ENCODE measurements at regions of chr22 and their contacts with region 1.

Region 1: DNA sequence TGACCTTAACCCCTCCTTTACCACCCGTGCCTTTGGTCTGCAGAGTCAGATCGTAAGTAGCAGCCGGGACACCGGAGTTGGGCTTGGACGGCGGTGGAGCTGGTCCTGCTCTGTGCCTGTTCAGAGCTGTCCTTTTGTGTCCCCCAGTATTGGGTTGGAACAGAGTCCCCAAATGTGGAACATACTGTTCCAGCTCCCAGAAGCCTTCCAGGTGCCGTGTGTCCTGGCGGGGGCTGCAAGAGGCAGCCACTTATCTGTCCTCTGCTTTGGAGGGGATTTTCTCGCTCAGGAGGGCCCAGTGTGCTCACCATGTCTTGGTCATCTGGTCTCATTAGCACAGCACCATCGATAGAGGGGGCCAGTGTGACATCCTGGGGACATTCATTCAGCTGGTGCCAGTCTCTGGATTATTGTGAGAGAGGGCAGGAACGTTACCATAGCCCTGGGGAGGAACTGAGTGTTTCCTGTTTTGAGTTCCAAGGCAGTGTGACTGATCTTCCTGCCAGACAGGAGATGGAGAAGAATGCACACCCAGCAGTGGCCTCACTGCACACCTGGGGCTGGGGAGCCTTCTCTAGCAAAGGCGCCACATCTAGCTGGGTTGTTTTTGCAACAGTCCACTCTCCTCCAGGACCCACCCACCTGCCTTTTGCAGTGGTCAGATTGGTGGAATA is 12.4 kb downstream of the CRELD2 start:
- DNase-seq: peak; percentile 63
- CTCF ChIP-seq: peak; percentile 80

Region 2: GRCh38 chr22:49779853-49780697 is 150.8 kb before region 1 on chr22:
- CTCF ChIA-PET with region 1: no interaction called
- POLR2A ChIA-PET with region 1: no interaction called
- DNase-seq: no peak
- CTCF ChIP-seq: no peak

Region 3: DNA sequence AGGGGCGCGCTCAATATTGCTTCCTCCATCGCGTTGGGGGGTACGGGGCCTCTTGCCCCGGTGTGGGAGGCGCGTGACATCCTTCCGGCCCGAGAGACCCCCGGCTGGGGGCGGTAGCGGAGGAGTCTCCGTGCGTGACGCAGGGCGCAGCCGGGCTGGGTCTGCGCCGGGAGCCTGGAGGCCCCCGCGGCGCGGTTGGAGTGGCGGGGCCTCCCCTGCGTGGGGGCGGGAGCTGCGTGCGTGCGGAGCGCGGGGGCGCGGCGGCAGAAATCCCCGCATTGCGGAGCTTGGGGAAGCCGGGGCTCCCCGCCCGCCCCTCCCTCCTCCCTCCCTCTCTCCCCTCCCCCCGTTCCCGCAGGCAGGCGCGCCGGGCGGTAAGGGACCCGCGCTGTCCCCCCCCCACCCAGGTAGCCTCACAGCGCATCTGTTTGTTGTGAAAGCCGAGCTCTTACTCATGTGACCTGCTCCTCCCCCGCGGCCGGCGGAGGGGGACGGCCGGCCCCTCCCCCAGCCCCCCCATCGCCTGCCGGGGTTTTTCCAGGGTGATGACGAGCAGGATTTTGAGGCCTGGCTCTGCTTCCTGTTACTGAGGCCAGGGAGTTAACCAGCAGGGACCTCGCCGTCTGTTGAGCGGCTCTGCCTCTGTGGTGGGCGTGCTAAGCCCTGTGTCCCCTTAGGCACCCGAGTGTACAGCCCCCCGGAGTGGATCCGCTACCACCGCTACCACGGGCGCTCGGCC is 31.3 kb after region 1 on chr22:
- CTCF ChIA-PET with region 1: interaction called, 32 read pairs
- POLR2A ChIA-PET with region 1: interaction called, 9 read pairs
- DNase-seq: peak; percentile 84
- CTCF ChIP-seq: no peak

Region 4: DNA sequence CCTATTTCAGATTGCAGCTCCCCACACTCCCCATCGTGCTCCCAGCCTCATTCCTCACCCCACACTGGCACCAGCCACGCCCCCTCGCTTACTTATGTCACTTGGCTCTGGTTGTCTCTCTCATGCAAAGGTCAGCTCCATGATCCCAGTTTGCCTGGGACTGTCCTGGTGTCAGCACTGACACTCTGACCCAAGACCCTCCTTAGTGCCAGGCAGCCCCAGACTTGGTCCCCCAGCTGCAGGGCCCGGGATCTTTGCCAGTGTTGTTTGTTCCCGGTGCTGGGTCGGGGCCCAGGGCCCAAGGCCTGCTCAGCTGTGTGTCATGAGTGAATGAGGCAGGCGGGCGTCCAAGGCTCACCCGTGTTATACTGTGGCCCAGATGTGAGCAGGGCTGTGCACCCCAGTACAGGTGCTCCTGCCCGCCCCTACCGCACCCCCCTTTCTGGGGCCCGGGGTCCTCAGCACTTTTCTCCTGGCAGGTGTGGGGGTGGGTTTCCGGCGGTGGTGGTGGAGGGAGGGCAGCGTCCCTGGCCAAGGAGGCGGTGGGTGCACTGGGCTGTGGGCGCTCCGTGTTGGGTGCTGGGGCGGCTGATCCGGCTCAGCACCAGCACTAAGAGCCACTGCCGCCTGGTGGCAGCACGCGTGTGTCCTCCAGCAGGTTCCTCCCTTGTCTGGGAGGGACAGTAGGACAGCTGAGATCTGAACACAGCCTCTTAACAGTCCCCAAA is 62.2 kb after region 1 on chr22:
- CTCF ChIA-PET with region 1: interaction called, 31 read pairs
- POLR2A ChIA-PET with region 1: no interaction called
- DNase-seq: peak; percentile 88
- CTCF ChIP-seq: peak; percentile 93

Region 5: GRCh38 chr22:50030297-50031188 is 99.7 kb after region 1 on chr22:
- CTCF ChIA-PET with region 1: interaction called, 90 read pairs
- POLR2A ChIA-PET with region 1: no interaction called
- DNase-seq: peak; percentile 93
- CTCF ChIP-seq: peak; percentile 96

Measured in GM10248 (cell line).